Motor neuron (in vitro differentiated cells): ENCODE measurements at regions of chr12 and their contacts with region 1.

Region 1: DNA sequence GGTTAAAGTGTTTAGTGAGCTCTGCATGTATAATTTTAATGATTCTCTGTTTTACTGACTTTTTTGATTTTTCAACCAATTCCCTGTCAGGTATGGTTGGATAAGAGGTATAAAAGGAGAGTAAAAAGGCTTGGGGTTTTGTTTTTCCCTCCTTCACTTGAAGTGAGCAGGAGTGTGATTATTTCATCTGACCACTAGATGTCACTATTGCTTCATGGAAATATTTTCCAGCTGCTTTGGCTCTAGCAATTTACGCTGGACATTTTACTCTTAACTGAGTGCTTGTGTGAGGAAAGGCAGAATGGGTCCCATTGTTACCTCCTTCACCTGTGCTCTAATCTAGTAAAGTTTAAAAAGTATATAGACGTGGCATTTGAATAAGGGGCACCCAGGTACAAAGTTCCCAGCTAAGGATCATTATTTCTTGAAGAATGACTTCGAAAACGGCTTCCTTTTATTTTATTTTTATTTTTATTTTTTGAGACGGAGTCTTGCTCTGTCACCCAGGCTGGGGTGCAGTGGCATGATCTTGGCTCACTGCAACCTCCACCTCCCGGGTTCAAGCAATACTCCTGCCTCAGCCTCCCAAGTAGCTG is 66.5 kb downstream of the TBC1D30 start:
- ATAC-seq: peak; percentile 48 to 72 (median 58)
- H3K4me3 ChIP-seq: no peak overlapping the region
- H3K27ac ChIP-seq: no peak overlapping the region
- H3K4me1 ChIP-seq: no peaks in the 10 kb centered on the region

Region 2: GRCh38 chr12:65106948-65107347 is 216.0 kb after region 1 on chr12:
- in situ Hi-C with region 1: loop called in 4 of 9 experiments (anchors 10 to 25 kb)
- ATAC-seq: no peak
- H3K4me3 ChIP-seq: no peak overlapping the region
- H3K27ac ChIP-seq: no peak overlapping the region
- H3K4me1 ChIP-seq: no peaks in the 10 kb centered on the region